Sigmoid colon (tissue), 7 donors: ENCODE measurements at regions of chr12 and their contacts with region 1.

Region 1: DNA sequence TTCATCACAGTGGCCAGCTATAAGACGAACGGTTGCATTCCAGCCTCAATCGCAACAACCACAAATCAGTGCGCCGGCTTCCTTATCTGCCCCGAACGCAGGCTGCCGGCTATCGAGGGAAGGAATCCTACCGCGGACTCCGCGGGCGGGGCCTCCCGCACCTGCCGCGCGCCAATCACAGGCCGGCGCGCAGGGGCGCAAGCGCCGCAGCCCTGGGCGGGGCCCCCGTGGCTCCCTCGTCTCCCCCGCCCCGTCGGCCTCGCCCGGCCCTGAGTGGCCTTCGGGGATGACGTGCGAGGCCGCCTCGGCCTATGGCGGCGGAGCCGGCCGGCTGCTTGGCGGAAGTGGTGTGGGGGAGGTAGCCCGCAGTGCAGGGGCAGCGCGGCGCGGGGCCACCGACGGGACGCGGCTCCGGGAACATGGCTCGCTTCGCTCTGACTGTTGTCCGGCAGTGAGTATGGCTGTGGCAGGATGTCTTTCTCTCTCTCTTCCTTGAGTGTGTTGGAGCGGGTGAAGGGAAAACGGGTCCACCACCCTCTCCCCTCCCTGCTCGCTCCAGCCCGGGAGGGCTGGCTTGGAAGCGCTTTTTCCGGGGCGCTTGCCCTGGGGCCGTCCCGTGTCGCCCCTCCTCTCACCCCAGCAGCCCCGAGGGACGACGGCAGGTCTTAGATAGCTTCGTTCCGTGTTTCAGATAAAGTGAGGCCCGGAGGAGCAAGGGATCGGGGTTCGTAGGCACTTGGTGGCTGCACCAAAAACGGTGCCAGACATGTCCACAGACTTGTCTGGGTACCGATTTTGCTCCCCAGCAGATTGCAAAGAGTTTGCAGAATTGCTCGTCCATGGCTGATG is at the start of gene TIGAR:
- DNase-seq: peak; percentile 97
- H3K4me3 ChIP-seq: peak within 1 kb of the TSS; percentile 84 to 96 (median 87)
- H3K27ac ChIP-seq: peak within 1 kb of the TSS; percentile 88 to 96 (median 94)
- H3K4me1 ChIP-seq: peaks cover 0 to 31% (median 20%) of the 10 kb centered on the region in 4 donors
- H3K27me3 ChIP-seq: no peaks in the 10 kb centered on the region
- CTCF ChIP-seq: no peak
- EP300 ChIP-seq: no peak
- POLR2A ChIP-seq: peak; percentile 86 to 89
- total RNA-seq, gene TIGAR: 4.4 to 6.0 (median 5.2) TPM

Region 2: GRCh38 chr12:3872800-3873636 is 448.1 kb before region 1 on chr12 and contains the start of gene PARP11:
- intact Hi-C with region 1: loop called (anchors 5 kb)
- DNase-seq: peak; percentile 99
- H3K4me3 ChIP-seq: peak within 1 kb of the TSS; percentile 58 to 71 (median 68)
- H3K27ac ChIP-seq: peak within 1 kb of the TSS; percentile 87 to 92 (median 91)
- H3K4me1 ChIP-seq: peaks cover 0 to 29% (median 19%) of the 10 kb centered on the region in 4 donors
- H3K27me3 ChIP-seq: no peaks in the 10 kb centered on the region
- CTCF ChIP-seq: no peak
- EP300 ChIP-seq: no peak
- POLR2A ChIP-seq: peak; percentile 21 to 37
- total RNA-seq, gene PARP11: 5.8 to 12.1 (median 8.8) TPM

Region 3: DNA sequence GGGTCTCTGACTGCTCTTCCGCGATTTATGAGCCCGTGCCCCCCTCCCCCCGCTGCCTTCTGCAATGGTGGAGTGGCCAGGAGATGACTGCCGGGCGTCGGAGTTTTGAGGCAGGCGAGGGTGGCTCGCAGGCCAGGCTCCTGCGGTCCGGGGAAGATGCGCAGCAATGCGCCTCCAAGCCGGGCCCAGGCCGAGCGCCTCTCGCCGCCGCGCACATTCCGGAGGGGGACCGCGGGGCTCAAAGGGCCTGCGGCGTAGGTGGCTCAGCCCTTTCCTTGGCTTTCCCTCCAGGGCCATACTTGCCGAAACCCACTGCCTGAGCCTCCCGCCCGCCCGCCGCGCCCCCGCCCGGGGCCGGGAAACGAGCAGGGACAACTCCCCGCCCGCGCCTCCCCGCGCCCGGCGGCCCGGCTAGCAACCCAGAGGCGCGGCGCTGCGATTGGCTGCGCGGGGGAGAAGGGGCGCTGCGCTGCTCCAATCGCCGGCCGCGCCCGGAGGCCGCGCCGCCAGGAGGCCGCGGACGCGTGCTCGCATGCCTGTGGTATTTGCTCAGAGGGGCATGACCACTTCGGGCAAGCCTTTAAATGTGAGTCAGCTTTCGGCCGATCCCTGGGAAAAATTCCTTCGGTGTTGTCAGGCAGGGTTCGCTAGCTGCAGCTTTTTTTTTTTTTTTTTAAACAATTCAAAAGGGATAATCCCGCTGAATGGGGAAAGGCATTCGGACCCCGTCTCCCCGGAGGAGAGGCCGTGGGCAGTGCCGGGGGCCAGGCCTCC is 290.0 kb before region 1 on chr12:
- intact Hi-C with region 1: loop called (anchors 5 kb)
- DNase-seq: peak; percentile 95
- H3K4me3 ChIP-seq: peak overlapping the region; percentile 36 to 62 (median 52)
- H3K27ac ChIP-seq: peak overlapping the region; percentile 71 to 93 (median 88)
- H3K4me1 ChIP-seq: peaks cover 0 to 14% (median 12%) of the 10 kb centered on the region in 4 donors
- H3K27me3 ChIP-seq: no peaks in the 10 kb centered on the region
- CTCF ChIP-seq: peak in 1 of 4 experiments; percentile 17
- EP300 ChIP-seq: peak in 1 of 4 donors; percentile 31
- POLR2A ChIP-seq: peak in 1 of 2 donors; percentile 59

Region 4: GRCh38 chr12:4178424-4179170 is 142.5 kb before region 1 on chr12:
- intact Hi-C with region 1: no loop called
- DNase-seq: no peak
- H3K4me3 ChIP-seq: no peak overlapping the region
- H3K27ac ChIP-seq: no peak overlapping the region
- H3K4me1 ChIP-seq: no peaks in the 10 kb centered on the region
- H3K27me3 ChIP-seq: no peaks in the 10 kb centered on the region
- CTCF ChIP-seq: no peak
- EP300 ChIP-seq: no peak
- POLR2A ChIP-seq: no peak

Region 5: GRCh38 chr12:4269279-4269991 is 51.6 kb before region 1 on chr12:
- intact Hi-C with region 1: no loop called
- DNase-seq: peak; percentile 95
- H3K4me3 ChIP-seq: peak overlapping the region; percentile 44 to 91 (median 74)
- H3K27ac ChIP-seq: peak overlapping the region; percentile 93 to 99 (median 95)
- H3K4me1 ChIP-seq: peaks cover 0 to 37% (median 28%) of the 10 kb centered on the region in 4 donors
- H3K27me3 ChIP-seq: no peaks in the 10 kb centered on the region
- CTCF ChIP-seq: peak in 2 of 4 experiments; percentile 29
- EP300 ChIP-seq: peak in 2 of 4 donors; percentile 63 to 75
- POLR2A ChIP-seq: peak in 1 of 2 donors; percentile 69

Region 6: DNA sequence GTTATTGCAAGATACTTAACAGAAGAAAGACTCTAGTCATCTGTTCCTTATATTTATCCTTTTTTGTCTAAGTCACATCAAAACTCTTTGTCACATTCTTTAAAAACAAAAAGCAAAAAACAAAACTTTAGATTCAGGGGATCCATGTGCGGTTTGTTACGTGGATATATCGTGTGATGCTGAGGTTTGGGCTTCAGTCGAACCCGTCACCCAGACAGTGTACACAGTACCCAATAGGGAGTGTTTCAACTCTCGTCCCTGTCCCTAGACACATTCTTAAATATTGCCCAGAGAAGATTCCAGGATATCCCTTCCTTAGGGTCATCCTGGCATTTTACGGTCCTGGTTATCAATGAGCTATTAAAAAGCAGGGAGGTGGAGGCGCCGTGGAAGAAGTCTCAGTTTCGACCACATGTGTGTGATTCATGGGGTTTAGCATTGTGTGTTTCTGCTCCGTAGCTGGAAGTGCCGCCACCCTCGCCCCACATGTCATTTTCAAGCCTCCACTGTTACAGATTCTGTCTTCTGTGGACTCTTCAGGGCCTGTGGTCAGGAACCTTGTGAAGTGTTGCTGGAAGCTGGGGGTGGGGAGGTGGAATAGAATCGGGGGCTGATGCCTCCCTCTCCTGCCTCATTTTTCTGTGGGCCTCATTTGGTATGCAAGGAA is 27.6 kb before region 1 on chr12:
- intact Hi-C with region 1: no loop called
- DNase-seq: no peak
- H3K4me3 ChIP-seq: no peak overlapping the region
- H3K27ac ChIP-seq: peak overlapping the region; percentile 52 to 86 (median 74)
- H3K4me1 ChIP-seq: peaks cover 0 to 81% (median 63%) of the 10 kb centered on the region in 4 donors
- H3K27me3 ChIP-seq: no peaks in the 10 kb centered on the region
- CTCF ChIP-seq: no peak
- EP300 ChIP-seq: no peak
- POLR2A ChIP-seq: no peak